Activated CD4-positive, alpha-beta T cell treated with anti-CD3 and anti-CD28 coated beads, Interleukin-2, amount 10 ng/mL, durations not matched to agents 24 days and 14 days (primary cell): ENCODE measurements at regions of chr3 and their contacts with region 1.

Region 1: GRCh38 chr3:152298393-152299242 is 29.9 kb downstream of the MBNL1 start:
- DNase-seq: peak; percentile 83
- H3K4me3 Mint-ChIP-seq: peak overlapping the region; percentile 88
- H3K27ac Mint-ChIP-seq: peak overlapping the region; percentile 98
- H3K4me1 Mint-ChIP-seq: peaks cover 59% of the 10 kb centered on the region
- H3K27me3 Mint-ChIP-seq: no peaks in the 10 kb centered on the region

Region 2: DNA sequence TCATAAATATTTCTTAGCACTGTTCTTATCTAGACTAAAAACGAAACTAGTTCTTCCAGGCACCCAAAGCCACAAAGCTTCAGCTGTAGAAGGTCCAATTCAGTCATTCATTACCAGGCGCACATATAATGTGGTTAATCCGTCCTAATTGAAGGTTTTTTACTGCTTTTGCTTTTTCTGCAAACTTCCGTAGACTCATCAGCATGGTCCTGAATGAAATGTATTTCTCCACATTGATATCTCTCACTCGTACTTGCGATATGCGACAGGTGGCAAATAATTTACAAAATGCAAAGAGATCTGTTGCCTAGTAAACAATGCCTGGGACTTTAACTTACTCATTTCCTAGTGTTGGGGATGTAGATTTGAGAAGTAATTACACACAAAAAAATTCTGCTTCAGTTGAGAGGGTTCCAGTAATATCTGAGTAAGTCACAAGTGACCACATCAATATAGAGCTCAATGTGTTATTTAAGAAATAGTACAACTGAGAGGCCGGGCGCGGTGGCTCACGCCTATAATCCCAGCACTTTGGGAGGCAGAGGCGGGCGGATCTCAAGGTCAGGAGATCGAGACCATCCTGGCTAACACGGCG is 104.8 kb before region 1 on chr3:
- intact Hi-C with region 1: no loop called
- DNase-seq: peak; percentile 82
- H3K4me3 Mint-ChIP-seq: peak overlapping the region; percentile 87
- H3K27ac Mint-ChIP-seq: peak overlapping the region; percentile 96
- H3K4me1 Mint-ChIP-seq: peaks cover 68% of the 10 kb centered on the region
- H3K27me3 Mint-ChIP-seq: no peaks in the 10 kb centered on the region

Region 3: DNA sequence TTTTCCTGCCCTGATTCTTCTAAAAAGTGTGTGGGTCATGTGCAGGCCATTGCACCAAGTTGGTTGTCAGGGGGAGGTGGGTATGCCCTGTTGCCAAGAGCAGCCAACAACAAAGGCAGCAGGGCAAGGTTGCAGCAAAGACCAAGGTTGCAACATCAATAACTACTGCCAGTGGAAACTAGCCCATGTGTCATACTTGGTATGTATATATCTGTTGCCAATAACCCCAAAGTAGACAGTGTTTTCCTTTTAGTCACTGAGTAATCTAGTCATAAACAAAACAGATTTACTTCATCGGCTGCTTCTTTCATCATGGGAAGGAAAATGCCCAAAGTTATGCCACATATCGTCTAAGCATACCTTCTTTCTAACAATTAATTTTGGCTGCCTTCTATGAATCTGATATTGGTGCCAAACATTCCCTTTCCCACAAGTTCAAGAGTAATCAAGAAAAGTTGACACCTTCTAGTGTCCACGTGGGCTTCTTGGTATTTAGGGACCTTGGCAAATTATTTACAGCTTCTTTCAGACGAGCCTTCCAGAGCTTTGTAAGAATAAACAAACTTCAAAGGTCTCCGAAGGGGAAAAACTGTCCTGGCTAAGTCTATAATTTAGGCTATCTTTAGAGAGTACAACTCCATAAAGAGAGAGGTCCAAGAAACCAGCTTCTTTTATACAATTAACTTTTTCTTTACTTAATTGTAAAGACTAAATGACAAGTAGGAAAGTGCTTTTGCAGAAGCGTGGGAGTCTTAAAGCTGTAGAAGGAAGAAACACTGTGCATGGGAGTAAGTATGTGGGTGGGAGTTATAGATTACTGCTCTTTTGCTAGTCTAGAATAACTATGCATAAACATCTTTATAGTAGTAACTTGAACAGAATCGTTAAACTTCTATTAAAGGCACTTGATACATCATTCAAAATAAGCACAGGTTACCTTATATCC is 39.9 kb before region 1 on chr3:
- intact Hi-C with region 1: loop called (anchors 1 kb)
- DNase-seq: peak; percentile 89
- H3K4me3 Mint-ChIP-seq: peak overlapping the region; percentile 79
- H3K27ac Mint-ChIP-seq: peak overlapping the region; percentile 97
- H3K4me1 Mint-ChIP-seq: peaks cover 75% of the 10 kb centered on the region
- H3K27me3 Mint-ChIP-seq: no peaks in the 10 kb centered on the region

Region 4: GRCh38 chr3:152309535-152310307 is 11.1 kb after region 1 on chr3:
- intact Hi-C with region 1: loop called (anchors 1 kb)
- DNase-seq: no peak
- H3K4me3 Mint-ChIP-seq: no peak overlapping the region
- H3K27ac Mint-ChIP-seq: peak overlapping the region; percentile 48
- H3K4me1 Mint-ChIP-seq: peaks cover 52% of the 10 kb centered on the region
- H3K27me3 Mint-ChIP-seq: no peaks in the 10 kb centered on the region

Region 5: DNA sequence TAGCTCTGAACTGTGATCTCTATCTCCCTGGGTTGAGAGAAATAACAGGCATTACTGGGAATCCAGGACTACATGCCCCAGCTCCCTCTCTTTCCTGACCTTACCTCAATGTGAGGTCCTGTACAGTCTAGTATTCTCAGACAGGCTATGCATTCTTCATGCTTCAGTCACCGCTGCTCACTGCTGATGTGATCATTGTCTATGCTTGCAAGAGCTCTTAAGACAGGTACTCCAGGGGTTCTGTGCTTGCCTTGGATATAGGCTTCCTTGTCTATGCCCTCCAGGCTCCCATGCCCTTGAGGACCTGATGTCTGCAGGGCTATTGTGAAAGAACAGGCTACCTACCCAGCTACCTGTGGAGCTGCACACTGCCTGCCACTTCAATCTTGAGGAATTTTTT is 153.7 kb after region 1 on chr3:
- intact Hi-C with region 1: no loop called
- DNase-seq: no peak
- H3K4me3 Mint-ChIP-seq: no peak overlapping the region
- H3K27ac Mint-ChIP-seq: peak overlapping the region; percentile 47
- H3K4me1 Mint-ChIP-seq: peaks cover 22% of the 10 kb centered on the region
- H3K27me3 Mint-ChIP-seq: no peaks in the 10 kb centered on the region

Region 6: DNA sequence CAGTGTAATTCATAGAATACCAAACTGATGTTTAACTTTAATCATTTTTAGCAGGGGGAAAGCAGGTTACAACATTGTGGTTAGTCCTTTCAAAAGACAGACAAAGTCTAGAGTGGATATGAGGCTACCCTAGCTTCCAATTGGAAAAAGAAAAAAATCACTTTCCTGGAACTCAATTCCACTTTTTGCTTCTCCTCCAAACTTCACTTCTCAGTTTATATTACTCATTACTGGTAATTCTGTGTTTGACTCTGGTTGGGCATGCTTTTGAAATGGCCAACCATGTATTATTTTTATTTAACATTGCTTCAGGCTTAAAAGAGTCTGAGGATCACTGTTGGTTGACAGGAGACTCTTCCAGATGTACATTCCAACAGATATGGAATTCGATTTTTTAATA is 948.2 kb after region 1 on chr3:
- intact Hi-C with region 1: no loop called
- DNase-seq: no peak
- H3K4me3 Mint-ChIP-seq: no peak overlapping the region
- H3K27ac Mint-ChIP-seq: no peak overlapping the region
- H3K4me1 Mint-ChIP-seq: peaks cover 4% of the 10 kb centered on the region
- H3K27me3 Mint-ChIP-seq: peaks cover 3% of the 10 kb centered on the region